PC-9 (cell line): ENCODE measurements at regions of chr3 and their contacts with region 1.

Region 1: GRCh38 chr3:123286308-123287023 is 84.7 kb downstream of the SEC22A start:
- DNase-seq: peak; percentile 55 to 68
- H3K4me3 ChIP-seq: no peak overlapping the region
- H3K27ac ChIP-seq: no peak overlapping the region
- H3K4me1 ChIP-seq: peaks cover 8% of the 10 kb centered on the region; the same call in 1 of the 2 replicates
- H3K27me3 ChIP-seq: no peaks in the 10 kb centered on the region
- CTCF ChIP-seq: peak; percentile 77

Region 2: GRCh38 chr3:123778991-123779622 is 492.6 kb after region 1 on chr3:
- CTCF ChIA-PET with region 1: interaction called, 17 read pairs
- POLR2A ChIA-PET with region 1: no interaction called
- intact Hi-C with region 1: no loop called
- DNase-seq: no peak
- H3K4me3 ChIP-seq: no peak overlapping the region
- H3K27ac ChIP-seq: no peak overlapping the region
- H3K4me1 ChIP-seq: no peaks in the 10 kb centered on the region
- H3K27me3 ChIP-seq: no peaks in the 10 kb centered on the region
- CTCF ChIP-seq: no peak